Sigmoid colon (tissue), 7 donors: ENCODE measurements at regions of chr6 and their contacts with region 1.

Region 1: GRCh38 chr6:35731736-35732532 is 4.9 kb upstream of the ARMC12 start:
- DNase-seq: peak; percentile 99
- H3K4me3 ChIP-seq: peak overlapping the region; percentile 49 to 79 (median 65)
- H3K27ac ChIP-seq: peak overlapping the region; percentile 96 to 100 (median 98)
- H3K4me1 ChIP-seq: peaks cover 5 to 81% (median 73%) of the 10 kb centered on the region in 4 donors
- H3K27me3 ChIP-seq: no peaks in the 10 kb centered on the region
- CTCF ChIP-seq: no peak
- EP300 ChIP-seq: peak; percentile 95 to 98 (median 98)
- POLR2A ChIP-seq: peak in 1 of 2 donors; percentile 51

Region 2: DNA sequence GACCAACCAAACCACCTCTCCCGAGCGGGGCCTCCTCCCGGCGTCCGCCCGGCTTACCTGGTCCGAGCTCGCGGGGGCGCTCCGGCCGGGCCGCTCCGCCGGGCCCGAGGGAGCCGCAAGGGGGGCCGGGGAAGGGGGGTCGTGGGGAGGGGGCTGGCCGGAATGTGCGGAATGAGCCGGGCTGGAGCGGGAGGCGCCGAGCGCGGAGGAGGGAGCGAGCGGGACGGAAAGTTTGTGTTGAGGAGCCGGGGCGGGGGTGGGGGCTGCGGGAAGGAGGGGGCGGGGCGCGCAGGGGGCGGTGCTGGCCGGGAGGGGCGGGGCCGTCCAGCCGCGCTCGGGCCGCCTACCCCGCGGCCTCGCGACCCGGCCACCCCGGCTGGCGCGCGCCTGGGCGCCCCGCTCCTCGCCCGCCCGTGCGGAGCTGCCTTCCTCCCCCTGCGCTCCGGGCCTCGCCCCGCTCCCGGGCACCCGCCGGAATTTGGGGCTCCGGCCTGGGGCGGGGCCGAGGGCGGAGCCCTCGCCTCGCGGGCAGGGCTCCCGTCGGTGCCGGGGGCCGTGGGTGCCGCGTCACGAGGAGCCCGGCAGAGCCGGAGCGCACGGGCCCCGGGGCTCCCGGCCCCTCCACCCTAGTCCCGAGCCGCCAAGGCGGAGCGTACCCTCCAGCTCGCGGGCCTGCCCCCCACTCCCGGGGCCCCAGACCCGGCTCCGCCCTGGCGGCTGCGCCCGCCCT is 234.9 kb before region 1 on chr6 and contains the start of gene TEAD3:
- intact Hi-C with region 1: loop called (anchors 2 kb)
- DNase-seq: peak; percentile 93
- H3K4me3 ChIP-seq: peak within 1 kb of the TSS; percentile 97 to 100 (median 98)
- H3K27ac ChIP-seq: peak within 1 kb of the TSS; percentile 100
- H3K4me1 ChIP-seq: peaks cover 0 to 56% (median 49%) of the 10 kb centered on the region in 4 donors
- H3K27me3 ChIP-seq: no peaks in the 10 kb centered on the region
- CTCF ChIP-seq: no peak
- EP300 ChIP-seq: no peak
- POLR2A ChIP-seq: peak in 1 of 2 donors; percentile 41
- total RNA-seq, gene TEAD3: 50.4 to 95.8 (median 74.8) TPM

Region 3: GRCh38 chr6:35601331-35602132 is 130.4 kb before region 1 on chr6:
- intact Hi-C with region 1: loop called (anchors 1 kb)
- DNase-seq: peak; percentile 92
- H3K4me3 ChIP-seq: peak overlapping the region in 3 of 4 donors; percentile 21 to 31 (median 21)
- H3K27ac ChIP-seq: peak overlapping the region; percentile 88 to 98 (median 91)
- H3K4me1 ChIP-seq: peaks cover 0 to 82% (median 75%) of the 10 kb centered on the region in 4 donors
- H3K27me3 ChIP-seq: no peaks in the 10 kb centered on the region
- CTCF ChIP-seq: no peak
- EP300 ChIP-seq: peak; percentile 100
- POLR2A ChIP-seq: no peak

Region 4: GRCh38 chr6:35663447-35664235 is 68.3 kb before region 1 on chr6:
- intact Hi-C with region 1: no loop called
- DNase-seq: no peak
- H3K4me3 ChIP-seq: no peak overlapping the region
- H3K27ac ChIP-seq: peak overlapping the region in 1 of 4 donors; percentile 26
- H3K4me1 ChIP-seq: peaks cover 0 to 53% (median 44%) of the 10 kb centered on the region in 4 donors
- H3K27me3 ChIP-seq: no peaks in the 10 kb centered on the region
- CTCF ChIP-seq: no peak
- EP300 ChIP-seq: no peak
- POLR2A ChIP-seq: no peak

Region 5: GRCh38 chr6:36594029-36594815 is 862.3 kb after region 1 on chr6 and contains the start of gene SRSF3:
- intact Hi-C with region 1: loop called (anchors 5 kb)
- DNase-seq: peak; percentile 99
- H3K4me3 ChIP-seq: peak within 1 kb of the TSS; percentile 71 to 85 (median 81)
- H3K27ac ChIP-seq: peak within 1 kb of the TSS; percentile 92 to 98 (median 96)
- H3K4me1 ChIP-seq: peaks cover 0 to 39% (median 34%) of the 10 kb centered on the region in 4 donors
- H3K27me3 ChIP-seq: no peaks in the 10 kb centered on the region
- CTCF ChIP-seq: peak in 3 of 4 experiments; percentile 40 to 51 (median 43)
- EP300 ChIP-seq: peak in 2 of 4 donors; percentile 3 to 11
- POLR2A ChIP-seq: peak; percentile 100
- total RNA-seq, gene SRSF3: 101 to 168 (median 122) TPM